ENCODE measurements at regions of chr2 and their contacts with region 1.

Region 1: DNA sequence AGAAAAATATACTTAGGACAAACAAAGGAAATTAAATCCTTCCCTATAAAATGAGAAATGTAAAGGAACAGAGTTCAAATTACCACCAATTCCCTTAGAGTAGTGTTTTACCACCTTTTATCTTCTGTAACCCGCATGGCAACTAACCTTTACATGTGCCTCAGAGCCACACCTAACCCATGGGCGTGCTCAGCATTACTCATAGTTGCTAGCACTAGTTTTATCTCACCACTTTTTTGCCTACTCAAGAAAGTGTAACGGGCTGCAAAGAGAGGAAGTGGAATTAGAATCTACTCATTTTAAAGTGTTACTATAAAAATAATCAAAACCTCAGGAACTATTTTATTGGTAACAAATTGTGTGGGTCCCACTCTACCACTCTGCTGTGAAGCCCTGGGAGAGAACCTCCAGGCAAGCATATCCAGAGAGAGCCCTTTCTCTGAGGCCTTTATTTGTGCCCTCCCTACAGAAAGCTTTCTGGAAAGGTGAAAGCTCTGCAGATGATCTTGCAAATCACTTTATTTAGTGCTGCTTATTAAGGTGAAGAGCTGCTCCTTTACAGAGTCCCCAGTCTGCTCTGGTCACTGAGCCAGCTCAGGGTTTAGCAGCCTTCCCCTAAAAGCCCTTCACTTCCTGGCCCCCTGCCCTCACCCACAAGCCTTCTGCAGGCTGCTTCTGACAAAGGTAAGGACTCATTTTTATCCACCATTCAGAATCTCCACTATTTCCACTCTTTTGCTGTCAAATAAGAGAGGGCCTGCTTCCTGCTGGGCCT is 98.8 kb downstream of the TRABD2A start:
- DNase-seq: peak; percentile 75
- H3K4me3 Mint-ChIP-seq: no peak overlapping the region
- H3K27ac Mint-ChIP-seq: peak overlapping the region; percentile 97
- H3K4me1 Mint-ChIP-seq: peaks cover 67% of the 10 kb centered on the region
- H3K27me3 Mint-ChIP-seq: no peaks in the 10 kb centered on the region

Region 2: GRCh38 chr2:84459018-84459943 is 322.8 kb before region 1 on chr2 and contains the start of gene SUCLG1:
- CTCF ChIA-PET with region 1: no interaction called
- POLR2A ChIA-PET with region 1: interaction called, 11 read pairs
- DNase-seq: peak; percentile 89
- H3K4me3 Mint-ChIP-seq: peak within 1 kb of the TSS; percentile 87
- H3K27ac Mint-ChIP-seq: peak within 1 kb of the TSS; percentile 77
- H3K4me1 Mint-ChIP-seq: peaks cover 40% of the 10 kb centered on the region
- H3K27me3 Mint-ChIP-seq: no peaks in the 10 kb centered on the region
- total RNA-seq, gene SUCLG1: 66.1 to 69.0 TPM

Region 3: DNA sequence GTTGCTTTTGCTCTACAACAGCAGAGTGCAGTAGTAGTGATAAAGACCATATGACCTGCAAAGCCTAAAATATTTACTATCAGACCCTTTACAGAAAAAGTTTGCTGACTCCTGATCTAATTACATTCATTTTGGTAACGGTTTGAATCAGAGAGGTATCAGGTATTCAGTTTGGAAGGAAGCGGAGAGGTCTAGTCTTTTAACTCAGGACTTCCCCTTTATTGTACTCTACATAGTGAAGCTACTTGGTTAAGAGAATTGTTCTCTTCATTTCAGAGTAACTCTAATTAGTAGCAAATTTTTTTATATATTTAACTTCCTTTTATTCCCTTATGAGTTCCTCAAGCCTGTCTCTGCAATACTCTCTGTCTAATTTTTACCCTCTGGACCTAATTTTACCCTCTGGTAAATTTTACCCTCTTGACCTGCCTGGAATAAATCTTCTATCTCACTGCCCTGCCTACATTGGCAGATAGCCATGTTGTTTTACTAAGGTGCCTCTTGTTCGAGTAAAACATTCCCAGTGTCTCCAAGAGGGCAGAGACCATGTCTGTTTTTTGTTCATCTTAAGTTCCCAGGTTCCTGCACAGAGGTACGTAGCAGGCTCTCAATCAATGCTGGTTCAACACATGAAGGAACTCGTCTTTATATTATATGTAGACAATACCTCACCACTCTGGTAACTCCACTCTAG is 95.2 kb before region 1 on chr2:
- CTCF ChIA-PET with region 1: no interaction called
- POLR2A ChIA-PET with region 1: no interaction called
- DNase-seq: no peak
- H3K4me3 Mint-ChIP-seq: no peak overlapping the region
- H3K27ac Mint-ChIP-seq: no peak overlapping the region
- H3K4me1 Mint-ChIP-seq: peaks cover 2% of the 10 kb centered on the region
- H3K27me3 Mint-ChIP-seq: no peaks in the 10 kb centered on the region

Region 4: DNA sequence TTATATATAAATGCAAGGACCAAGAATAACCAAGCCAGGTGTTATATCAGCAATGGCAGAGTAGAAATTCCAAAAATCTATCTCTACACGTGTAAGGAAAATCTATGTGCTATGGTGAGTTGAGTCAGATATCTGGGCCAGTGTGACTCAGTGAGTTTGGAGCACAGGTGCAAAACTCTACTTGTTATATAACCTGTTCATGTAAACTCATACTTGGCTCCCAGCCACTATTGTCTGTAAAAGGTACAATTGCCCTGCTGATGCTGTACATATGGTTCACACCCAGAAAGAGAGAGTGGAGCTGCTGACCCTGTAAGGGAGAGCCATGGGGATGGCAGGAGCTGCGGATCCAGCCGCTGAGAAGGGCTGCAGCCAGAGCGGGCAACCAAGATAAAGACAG is 13.3 kb before region 1 on chr2:
- CTCF ChIA-PET with region 1: no interaction called
- POLR2A ChIA-PET with region 1: interaction called, 10 read pairs
- DNase-seq: no peak
- H3K4me3 Mint-ChIP-seq: no peak overlapping the region
- H3K27ac Mint-ChIP-seq: no peak overlapping the region
- H3K4me1 Mint-ChIP-seq: peaks cover 2% of the 10 kb centered on the region
- H3K27me3 Mint-ChIP-seq: no peaks in the 10 kb centered on the region

Region 5: DNA sequence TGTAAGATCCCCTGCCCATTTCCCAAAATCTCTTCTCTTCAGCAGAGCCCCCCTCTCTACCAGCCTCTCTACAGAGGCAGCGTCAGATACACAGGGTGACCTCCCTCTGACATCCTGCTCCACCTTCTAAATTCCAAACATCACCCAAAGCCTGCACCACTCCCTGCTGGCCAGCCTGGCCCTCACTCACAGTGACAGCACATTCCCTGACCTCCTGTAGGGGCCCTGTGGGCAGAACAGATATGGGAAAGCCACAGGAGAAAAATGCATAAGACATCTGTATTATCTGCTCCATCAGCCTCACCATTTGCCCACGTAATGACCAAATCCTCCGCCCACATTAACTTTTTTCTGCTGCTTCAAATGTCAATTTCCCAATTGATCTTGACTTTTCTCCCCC is 58.2 kb after region 1 on chr2:
- CTCF ChIA-PET with region 1: interaction called, 3 read pairs
- POLR2A ChIA-PET with region 1: interaction called, 66 read pairs
- DNase-seq: no peak
- H3K4me3 Mint-ChIP-seq: peak overlapping the region; percentile 43
- H3K27ac Mint-ChIP-seq: peak overlapping the region; percentile 37
- H3K4me1 Mint-ChIP-seq: peaks cover 52% of the 10 kb centered on the region
- H3K27me3 Mint-ChIP-seq: no peaks in the 10 kb centered on the region

Region 6: DNA sequence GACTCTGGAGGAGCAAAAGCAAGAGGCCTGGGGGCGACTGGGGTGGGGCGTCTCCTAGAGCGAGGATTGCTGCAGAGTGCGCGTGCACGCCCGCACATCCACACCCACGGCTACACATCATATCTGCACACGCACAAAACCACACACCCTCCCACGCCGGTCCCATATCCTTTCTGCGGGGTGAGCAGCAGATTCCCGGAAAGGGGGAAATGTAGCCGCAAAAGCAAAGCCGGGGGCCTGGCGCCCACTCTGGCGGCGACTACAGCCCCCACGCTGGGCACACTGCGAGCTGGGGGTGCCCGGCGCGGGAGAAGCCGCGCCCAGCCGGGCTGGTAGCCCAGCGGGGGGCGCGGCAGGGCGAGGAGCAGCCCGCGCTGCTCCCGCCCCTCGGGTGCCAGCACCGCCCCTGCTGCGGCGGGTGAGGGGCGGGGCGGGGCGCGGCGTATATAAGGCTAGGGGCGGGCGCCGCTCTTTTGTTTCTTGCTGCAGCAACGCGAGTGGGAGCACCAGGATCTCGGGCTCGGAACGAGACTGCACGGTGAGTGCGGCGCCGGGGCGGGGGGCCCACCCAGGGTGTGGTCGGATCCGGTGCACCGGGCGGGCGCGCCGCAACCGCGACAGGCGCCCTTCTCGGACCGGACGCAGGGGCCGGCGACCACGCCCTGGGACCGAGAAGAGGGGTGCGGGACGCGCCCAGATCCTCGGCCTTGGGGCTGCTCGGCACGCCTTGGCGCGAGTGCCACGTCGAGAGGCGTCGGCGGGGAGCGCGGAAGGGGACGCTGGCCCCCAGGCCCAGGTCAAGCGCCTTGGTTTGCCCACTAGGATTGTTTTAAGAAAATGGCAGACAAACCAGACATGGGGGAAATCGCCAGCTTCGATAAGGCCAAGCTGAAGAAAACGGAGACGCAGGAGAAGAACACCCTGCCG is 123.3 kb after region 1 on chr2 and contains the start of gene TMSB10:
- CTCF ChIA-PET with region 1: no interaction called
- POLR2A ChIA-PET with region 1: interaction called, 21 read pairs
- DNase-seq: peak; percentile 91
- H3K4me3 Mint-ChIP-seq: peak within 1 kb of the TSS; percentile 89
- H3K27ac Mint-ChIP-seq: peak within 1 kb of the TSS; percentile 94
- H3K4me1 Mint-ChIP-seq: peaks cover 67% of the 10 kb centered on the region
- H3K27me3 Mint-ChIP-seq: no peaks in the 10 kb centered on the region
- total RNA-seq, gene TMSB10: 5,686 to 5,768 TPM

Measured in activated CD4-positive, alpha-beta memory T cell treated with anti-CD3 and anti-CD28 coated beads, Interleukin-2, amount 10 ng/mL, durations not matched to agents 7 days and 5 days (primary cell).